CD8-positive, alpha-beta T cell (primary cell): ENCODE measurements at regions of chr10 and their contacts with region 1.

Region 1: DNA sequence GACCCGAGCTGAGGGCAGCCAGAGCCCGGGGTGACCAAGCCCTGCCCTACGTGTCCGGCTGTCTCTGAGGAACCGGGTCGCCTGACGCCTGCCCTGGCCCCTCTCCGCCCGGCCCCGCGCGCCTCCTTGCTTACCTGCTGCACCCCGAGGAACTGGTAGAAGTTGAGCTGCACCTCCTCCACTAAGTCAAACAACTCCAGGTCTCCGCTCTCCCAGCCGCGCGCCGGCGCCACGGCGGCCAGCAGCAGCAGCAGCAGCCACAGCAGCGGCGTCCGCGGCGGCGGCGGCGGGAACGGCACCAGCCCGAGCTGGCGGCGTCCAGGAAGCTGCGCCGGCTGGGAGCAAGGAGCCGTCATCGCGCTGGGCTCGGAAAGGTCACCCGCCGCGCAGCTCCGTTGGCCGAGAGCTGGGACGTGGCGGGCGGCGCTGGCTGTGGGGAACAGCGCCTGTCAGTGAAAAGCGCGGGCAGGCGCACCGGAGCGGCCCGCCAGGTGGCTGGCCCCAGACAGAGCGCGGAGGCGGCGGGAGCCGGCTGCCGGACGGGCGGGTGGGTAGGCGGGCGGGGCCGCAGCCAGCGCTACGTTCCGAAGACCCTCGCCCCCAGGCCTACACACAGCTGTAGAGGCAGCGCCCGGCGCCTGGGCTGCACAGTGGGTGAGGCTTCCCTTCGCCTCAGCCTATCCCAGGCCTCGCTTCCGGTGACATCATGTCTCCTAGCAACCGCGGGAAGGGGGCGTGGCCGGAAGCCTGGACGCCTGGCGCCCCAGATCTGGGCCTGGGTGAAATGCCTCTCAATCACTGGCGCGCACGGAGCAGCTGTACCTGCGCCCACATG is at the start of gene DNAJC1:
- DNase-seq: peak; percentile 96 to 99 (median 98)
- ATAC-seq: peak; percentile 90
- H3K4me3 ChIP-seq: peak within 1 kb of the TSS; percentile 71 to 95
- H3K4me3 Mint-ChIP-seq: peak within 1 kb of the TSS; percentile 95
- H3K27ac ChIP-seq: peak within 1 kb of the TSS; percentile 80 to 85
- H3K27ac Mint-ChIP-seq: peak within 1 kb of the TSS; percentile 94
- H3K4me1 ChIP-seq: peaks cover 16% of the 10 kb centered on the region
- H3K4me1 Mint-ChIP-seq: peaks cover 48% of the 10 kb centered on the region
- H3K27me3 ChIP-seq: no peaks in the 10 kb centered on the region
- H3K27me3 Mint-ChIP-seq: peaks cover 2% of the 10 kb centered on the region
- CTCF ChIP-seq: no peak
- total RNA-seq, gene DNAJC1: 15.3 to 18.1 TPM

Region 2: GRCh38 chr10:21533467-21534279 is 469.6 kb before region 1 on chr10 and contains the start of gene MLLT10:
- CTCF ChIA-PET with region 1: interaction called, 4 read pairs
- POLR2A ChIA-PET with region 1: no interaction called
- intact Hi-C with region 1: loop called (anchors 1 to 5 kb)
- DNase-seq: peak; percentile 83 to 98 (median 92)
- ATAC-seq: peak; percentile 84
- H3K4me3 ChIP-seq: peak within 1 kb of the TSS; percentile 69 to 81
- H3K4me3 Mint-ChIP-seq: peak within 1 kb of the TSS; percentile 96
- H3K27ac ChIP-seq: peak within 1 kb of the TSS; percentile 64 to 75
- H3K27ac Mint-ChIP-seq: peak within 1 kb of the TSS; percentile 94
- H3K4me1 ChIP-seq: peaks cover 16% of the 10 kb centered on the region
- H3K4me1 Mint-ChIP-seq: peaks cover 29% of the 10 kb centered on the region
- H3K27me3 ChIP-seq: no peaks in the 10 kb centered on the region
- H3K27me3 Mint-ChIP-seq: no peaks in the 10 kb centered on the region
- CTCF ChIP-seq: peak; percentile 22
- total RNA-seq, gene MLLT10: 36.7 to 41.0 TPM

Region 3: GRCh38 chr10:21961847-21962246 is 41.4 kb before region 1 on chr10:
- CTCF ChIA-PET with region 1: no interaction called
- POLR2A ChIA-PET with region 1: no interaction called
- intact Hi-C with region 1: no loop called
- DNase-seq: no peak
- ATAC-seq: no peak
- H3K4me3 ChIP-seq: no peak overlapping the region
- H3K4me3 Mint-ChIP-seq: no peak overlapping the region
- H3K27ac ChIP-seq: no peak overlapping the region
- H3K27ac Mint-ChIP-seq: no peak overlapping the region
- H3K4me1 ChIP-seq: no peaks in the 10 kb centered on the region
- H3K4me1 Mint-ChIP-seq: peaks cover 19% of the 10 kb centered on the region
- H3K27me3 ChIP-seq: no peaks in the 10 kb centered on the region
- H3K27me3 Mint-ChIP-seq: no peaks in the 10 kb centered on the region
- CTCF ChIP-seq: no peak

Region 4: GRCh38 chr10:22228943-22229801 is 225.9 kb after region 1 on chr10:
- CTCF ChIA-PET with region 1: interaction called, 3 read pairs
- POLR2A ChIA-PET with region 1: interaction called, 13 read pairs
- intact Hi-C with region 1: loop called (anchors 1 to 5 kb)
- DNase-seq: peak; percentile 66 to 92 (median 86)
- ATAC-seq: peak; percentile 76
- H3K4me3 ChIP-seq: peak overlapping the region; percentile 67 to 77
- H3K4me3 Mint-ChIP-seq: peak overlapping the region; percentile 82
- H3K27ac ChIP-seq: peak overlapping the region; percentile 60 to 63
- H3K27ac Mint-ChIP-seq: peak overlapping the region; percentile 98
- H3K4me1 ChIP-seq: peaks cover 8% of the 10 kb centered on the region
- H3K4me1 Mint-ChIP-seq: peaks cover 14% of the 10 kb centered on the region
- H3K27me3 ChIP-seq: peaks cover 0 to 3% of the 10 kb centered on the region in 2 experiments
- H3K27me3 Mint-ChIP-seq: no peaks in the 10 kb centered on the region
- CTCF ChIP-seq: no peak

Region 5: GRCh38 chr10:22340362-22341189 is 337.3 kb after region 1 on chr10:
- CTCF ChIA-PET with region 1: no interaction called
- POLR2A ChIA-PET with region 1: no interaction called
- intact Hi-C with region 1: loop called in 1 of 2 experiments (anchors 5 kb)
- DNase-seq: peak in 6 of 9 experiments; percentile 50 to 75 (median 64)
- ATAC-seq: peak; percentile 39
- H3K4me3 ChIP-seq: peak overlapping the region; percentile 50 to 70
- H3K4me3 Mint-ChIP-seq: peak overlapping the region; percentile 87
- H3K27ac ChIP-seq: peak overlapping the region; percentile 25 to 40
- H3K27ac Mint-ChIP-seq: peak overlapping the region; percentile 84
- H3K4me1 ChIP-seq: peaks cover 18% of the 10 kb centered on the region
- H3K4me1 Mint-ChIP-seq: peaks cover 14% of the 10 kb centered on the region
- H3K27me3 ChIP-seq: peaks cover 74 to 87% of the 10 kb centered on the region in 2 experiments
- H3K27me3 Mint-ChIP-seq: peaks cover 67% of the 10 kb centered on the region
- CTCF ChIP-seq: no peak

Region 6: DNA sequence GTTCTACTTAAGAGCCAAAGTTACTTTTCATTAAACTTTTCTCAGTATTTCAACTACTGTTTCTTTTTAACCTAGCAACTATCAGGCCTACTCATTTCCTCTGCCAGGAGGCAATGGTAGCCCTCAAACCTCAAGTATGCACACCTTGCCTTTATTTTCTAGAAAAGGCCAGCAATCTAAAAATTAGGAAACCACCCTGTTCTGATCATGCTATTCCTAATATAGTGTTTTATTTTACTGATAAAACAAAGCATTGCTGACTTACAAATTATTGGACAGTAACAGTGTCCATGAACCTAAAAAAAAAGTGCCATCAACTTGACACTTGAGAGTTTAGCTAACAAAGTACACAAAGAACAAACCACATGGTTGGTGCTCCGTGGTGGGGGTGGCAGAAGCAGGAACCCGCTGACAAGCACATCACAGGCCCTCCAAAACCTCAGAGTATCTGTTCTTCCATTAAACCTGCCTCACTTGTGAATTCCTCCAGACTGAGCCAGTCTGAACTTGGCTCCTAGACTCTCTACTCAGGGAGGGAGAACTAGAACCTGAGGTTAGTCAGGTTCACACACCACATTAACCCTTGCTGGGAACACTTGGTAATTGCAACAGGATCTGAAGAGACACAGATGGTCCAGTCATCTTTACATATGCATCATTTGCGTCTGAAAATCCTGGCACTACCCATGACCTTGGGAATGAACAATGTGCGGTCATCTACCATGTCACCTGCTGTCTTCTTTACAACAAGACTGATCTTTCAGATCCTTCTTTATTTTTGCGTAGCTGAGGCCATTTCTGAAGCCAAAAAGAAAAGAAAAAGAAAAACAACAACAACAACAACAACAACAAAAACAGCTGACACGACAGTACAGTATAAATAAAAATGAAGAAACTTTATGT is 679.2 kb after region 1 on chr10:
- CTCF ChIA-PET with region 1: no interaction called
- POLR2A ChIA-PET with region 1: no interaction called
- intact Hi-C with region 1: loop called in 1 of 2 experiments (anchors 10 kb)
- DNase-seq: peak; percentile 31 to 89 (median 71)
- ATAC-seq: peak; percentile 51
- H3K4me3 ChIP-seq: peak overlapping the region; percentile 4 to 34
- H3K4me3 Mint-ChIP-seq: peak overlapping the region; percentile 68
- H3K27ac ChIP-seq: peak overlapping the region; percentile 75 to 85
- H3K27ac Mint-ChIP-seq: peak overlapping the region; percentile 98
- H3K4me1 ChIP-seq: peaks cover 97% of the 10 kb centered on the region
- H3K4me1 Mint-ChIP-seq: peaks cover 94% of the 10 kb centered on the region
- H3K27me3 ChIP-seq: no peaks in the 10 kb centered on the region
- H3K27me3 Mint-ChIP-seq: no peaks in the 10 kb centered on the region
- CTCF ChIP-seq: no peak

Region 7: GRCh38 chr10:23016636-23017035 is 1013.3 kb after region 1 on chr10:
- CTCF ChIA-PET with region 1: no interaction called
- POLR2A ChIA-PET with region 1: no interaction called
- intact Hi-C with region 1: no loop called
- DNase-seq: no peak
- ATAC-seq: no peak
- H3K4me3 ChIP-seq: no peak overlapping the region
- H3K4me3 Mint-ChIP-seq: no peak overlapping the region
- H3K27ac ChIP-seq: no peak overlapping the region
- H3K27ac Mint-ChIP-seq: no peak overlapping the region
- H3K4me1 ChIP-seq: no peaks in the 10 kb centered on the region
- H3K4me1 Mint-ChIP-seq: no peaks in the 10 kb centered on the region
- H3K27me3 ChIP-seq: no peaks in the 10 kb centered on the region
- H3K27me3 Mint-ChIP-seq: peaks cover 25% of the 10 kb centered on the region
- CTCF ChIP-seq: no peak

Region 8: GRCh38 chr10:23438550-23439441 is 1435.5 kb after region 1 on chr10 and contains the start of gene OTUD1:
- CTCF ChIA-PET with region 1: no interaction called
- POLR2A ChIA-PET with region 1: no interaction called
- intact Hi-C with region 1: loop called (anchors 10 kb)
- DNase-seq: peak; percentile 87 to 96 (median 93)
- ATAC-seq: peak; percentile 89
- H3K4me3 ChIP-seq: peak within 1 kb of the TSS; percentile 68 to 77
- H3K4me3 Mint-ChIP-seq: peak within 1 kb of the TSS; percentile 93
- H3K27ac ChIP-seq: peak within 1 kb of the TSS; percentile 82 to 90
- H3K27ac Mint-ChIP-seq: peak within 1 kb of the TSS; percentile 91
- H3K4me1 ChIP-seq: peaks cover 32% of the 10 kb centered on the region
- H3K4me1 Mint-ChIP-seq: peaks cover 37% of the 10 kb centered on the region
- H3K27me3 ChIP-seq: no peaks in the 10 kb centered on the region
- H3K27me3 Mint-ChIP-seq: no peaks in the 10 kb centered on the region
- CTCF ChIP-seq: no peak
- total RNA-seq, gene OTUD1: 78.9 to 81.3 TPM